GM10248 (cell line): ENCODE measurements at regions of chr7 and their contacts with region 1.

Region 1: DNA sequence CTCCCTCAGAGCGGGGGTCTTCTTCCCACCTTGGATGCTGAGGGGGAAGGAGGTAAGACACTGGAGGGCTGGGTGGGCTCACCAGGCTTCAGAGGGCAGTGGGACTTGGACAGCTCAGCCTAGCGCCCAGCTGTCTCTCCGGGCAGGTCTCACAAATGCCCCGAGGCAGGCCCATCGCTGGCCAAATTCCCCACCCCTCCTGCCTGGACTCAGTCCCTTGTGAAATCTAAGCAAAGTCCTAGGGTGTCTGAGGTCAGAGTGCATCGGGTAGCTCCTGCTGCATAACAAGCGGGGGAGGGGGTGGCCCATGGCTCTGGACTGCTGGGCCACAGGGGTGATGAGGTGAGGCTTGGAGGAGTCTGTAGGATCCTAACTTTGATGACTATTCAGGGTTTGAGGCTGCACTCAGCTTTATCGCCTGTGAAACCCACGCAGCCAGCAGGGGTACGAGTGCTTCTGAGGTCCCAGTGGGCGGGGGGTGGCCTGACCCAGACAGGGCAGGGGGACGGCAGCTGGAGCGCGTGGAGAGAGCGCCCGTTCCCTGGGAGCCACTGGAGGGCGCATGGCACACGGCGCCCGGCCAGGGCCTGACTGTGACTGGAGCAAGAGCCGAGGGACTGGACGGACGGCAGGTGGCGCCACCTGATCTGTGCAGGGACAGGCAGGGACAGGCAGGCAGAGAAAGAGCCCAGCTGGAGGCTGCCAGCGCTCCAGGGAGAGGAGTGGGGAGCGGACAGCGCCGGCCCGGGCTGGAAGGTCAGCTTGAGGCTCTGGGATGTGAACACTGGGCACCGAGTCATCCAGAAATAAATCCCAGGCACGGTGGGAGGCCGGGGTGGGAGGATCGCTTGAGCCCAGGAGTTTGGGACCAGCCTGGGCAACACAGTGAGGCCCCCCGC is 10.0 kb downstream of the CYP2W1 start:
- DNase-seq: peak; percentile 91
- CTCF ChIP-seq: peak; percentile 100

Region 2: DNA sequence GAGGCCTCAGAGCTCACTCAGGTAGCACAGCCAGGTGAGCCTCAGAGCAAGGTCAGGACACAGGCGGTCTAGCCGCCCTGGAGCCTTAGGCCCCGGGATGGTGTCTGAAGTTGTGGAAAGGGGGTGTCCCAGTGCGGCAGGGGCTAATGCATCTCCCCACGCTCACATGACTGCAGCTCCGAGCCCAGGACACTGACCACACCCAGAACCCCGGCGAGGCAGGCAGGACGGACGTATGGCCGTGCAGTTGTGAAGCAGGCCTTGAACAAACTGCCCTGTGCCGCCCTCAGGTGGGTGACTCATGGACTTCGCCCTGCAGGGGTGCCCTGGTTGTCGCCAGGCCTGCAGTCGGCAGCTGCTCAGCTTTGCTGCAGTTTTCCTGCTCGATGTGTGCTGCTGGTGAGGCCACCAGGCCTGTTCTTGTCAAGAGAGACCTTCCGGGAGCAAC is 260.8 kb before region 1 on chr7:
- CTCF ChIA-PET with region 1: no interaction called
- POLR2A ChIA-PET with region 1: no interaction called
- DNase-seq: no peak
- CTCF ChIP-seq: no peak

Region 3: DNA sequence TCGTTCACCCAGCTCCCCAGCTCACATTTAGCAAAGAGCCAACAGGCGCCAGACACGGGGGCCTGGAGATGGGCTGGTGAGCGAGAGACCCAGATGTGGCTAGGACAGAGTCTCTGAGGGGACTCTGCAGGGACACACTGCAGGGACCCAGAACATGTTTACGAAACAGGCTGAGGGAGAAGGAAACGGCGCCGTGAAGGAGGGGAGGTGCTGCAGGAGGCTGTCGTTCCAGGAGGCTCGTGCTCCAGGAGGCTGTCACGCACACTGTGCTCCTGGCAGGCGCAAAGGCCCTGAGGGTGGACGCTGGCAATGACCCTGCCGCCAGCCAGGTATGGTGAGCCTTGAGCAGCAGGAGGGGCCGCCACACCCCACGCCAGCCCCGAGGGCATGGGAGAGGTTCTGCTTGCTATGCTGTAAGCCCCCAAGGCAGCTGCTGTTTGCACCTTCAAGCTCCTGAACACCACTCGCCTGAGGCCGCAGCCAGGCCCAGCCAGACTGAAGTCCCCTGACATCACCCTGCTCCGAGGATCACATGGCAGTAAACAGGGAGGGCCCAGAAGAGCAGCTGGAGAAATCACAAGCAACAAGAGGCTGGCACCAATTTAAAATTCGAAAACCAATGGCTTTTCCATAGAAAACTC is 65.8 kb before region 1 on chr7:
- CTCF ChIA-PET with region 1: interaction called, 19 read pairs
- POLR2A ChIA-PET with region 1: interaction called, 3 read pairs
- DNase-seq: no peak
- CTCF ChIP-seq: no peak

Region 4: DNA sequence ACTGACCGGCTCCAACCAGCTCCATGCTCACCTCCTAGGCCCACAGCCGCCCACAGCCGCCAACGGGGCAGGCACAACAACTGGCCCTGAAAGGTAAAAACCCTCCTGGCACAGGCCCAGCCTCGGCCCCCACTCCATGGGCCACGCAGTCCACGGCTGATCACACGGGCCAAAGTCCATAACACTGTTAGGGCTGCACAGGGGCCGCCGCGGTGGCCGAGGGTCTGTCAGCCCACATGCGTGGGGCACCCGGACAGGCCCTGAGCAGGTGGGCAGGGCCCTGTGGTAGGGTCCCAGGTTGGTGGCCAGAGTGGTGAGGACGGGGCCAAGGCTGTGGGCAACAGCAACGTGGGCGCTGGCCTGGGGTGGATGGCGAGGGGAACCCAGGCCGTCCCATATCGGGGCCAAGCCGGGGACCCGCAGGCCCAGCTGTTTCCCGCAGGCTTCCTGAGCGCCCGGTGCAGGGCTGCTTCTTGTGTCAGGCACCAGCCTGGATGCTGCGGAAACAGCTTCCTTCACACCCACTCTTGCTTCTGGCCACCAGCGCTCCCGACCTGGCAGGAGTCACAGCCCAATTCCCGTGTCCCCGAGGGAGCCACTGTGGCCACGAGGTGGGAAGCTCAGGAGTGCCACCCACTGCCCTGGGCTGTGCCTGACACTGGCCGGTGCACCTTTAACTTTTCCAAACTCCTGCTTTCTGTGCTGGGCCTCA is 19.2 kb after region 1 on chr7:
- CTCF ChIA-PET with region 1: interaction called, 17 read pairs
- POLR2A ChIA-PET with region 1: no interaction called
- DNase-seq: no peak
- CTCF ChIP-seq: no peak

Region 5: DNA sequence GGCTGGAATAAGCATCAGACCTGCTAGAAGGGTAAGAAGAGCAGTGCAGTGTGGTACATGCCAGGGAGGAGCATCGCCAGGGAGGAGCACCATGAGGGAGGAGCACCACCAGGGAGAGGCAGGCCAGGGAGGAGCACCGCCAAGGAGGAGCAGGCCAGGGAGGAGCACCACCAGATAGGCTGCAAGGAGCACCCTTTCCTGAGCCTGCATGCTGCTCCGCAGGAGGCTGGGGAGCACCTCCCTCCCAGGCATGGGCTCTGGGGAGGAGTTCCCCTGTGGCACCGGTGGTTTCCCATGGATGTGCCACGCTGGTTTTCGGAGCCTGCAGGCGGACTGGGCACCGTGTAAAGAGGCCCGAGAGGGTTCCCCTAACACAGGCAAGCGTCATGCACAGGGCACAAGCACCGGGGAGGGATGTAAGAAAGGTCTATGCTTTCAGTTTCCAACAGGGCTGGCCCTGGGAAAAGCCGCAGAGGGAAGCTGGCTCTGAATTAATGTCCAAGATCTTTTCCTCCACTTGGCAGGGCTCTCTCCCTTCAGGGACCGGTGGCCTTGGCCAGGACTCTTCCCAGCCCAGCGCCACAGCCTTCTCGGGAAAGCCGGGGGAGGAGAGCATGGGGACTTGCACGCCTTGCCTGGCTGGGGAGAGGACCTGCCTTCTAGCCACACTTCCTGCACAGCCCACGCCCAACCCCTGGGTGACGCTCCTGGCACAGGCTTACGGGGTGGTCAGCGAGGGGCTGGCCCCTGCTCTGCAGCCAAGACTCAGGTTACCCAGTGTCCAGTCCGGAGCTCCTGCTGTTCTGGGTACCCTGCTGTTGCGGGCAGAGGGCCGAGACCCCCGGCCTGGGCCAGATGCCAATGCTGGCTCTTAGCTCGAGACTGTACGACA is 83.5 kb after region 1 on chr7:
- CTCF ChIA-PET with region 1: interaction called, 15 read pairs
- POLR2A ChIA-PET with region 1: no interaction called
- DNase-seq: no peak
- CTCF ChIP-seq: no peak

Region 6: GRCh38 chr7:1144269-1144771 is 151.4 kb after region 1 on chr7:
- CTCF ChIA-PET with region 1: interaction called, 36 read pairs
- POLR2A ChIA-PET with region 1: no interaction called
- DNase-seq: peak; percentile 52
- CTCF ChIP-seq: peak; percentile 58

Region 7: DNA sequence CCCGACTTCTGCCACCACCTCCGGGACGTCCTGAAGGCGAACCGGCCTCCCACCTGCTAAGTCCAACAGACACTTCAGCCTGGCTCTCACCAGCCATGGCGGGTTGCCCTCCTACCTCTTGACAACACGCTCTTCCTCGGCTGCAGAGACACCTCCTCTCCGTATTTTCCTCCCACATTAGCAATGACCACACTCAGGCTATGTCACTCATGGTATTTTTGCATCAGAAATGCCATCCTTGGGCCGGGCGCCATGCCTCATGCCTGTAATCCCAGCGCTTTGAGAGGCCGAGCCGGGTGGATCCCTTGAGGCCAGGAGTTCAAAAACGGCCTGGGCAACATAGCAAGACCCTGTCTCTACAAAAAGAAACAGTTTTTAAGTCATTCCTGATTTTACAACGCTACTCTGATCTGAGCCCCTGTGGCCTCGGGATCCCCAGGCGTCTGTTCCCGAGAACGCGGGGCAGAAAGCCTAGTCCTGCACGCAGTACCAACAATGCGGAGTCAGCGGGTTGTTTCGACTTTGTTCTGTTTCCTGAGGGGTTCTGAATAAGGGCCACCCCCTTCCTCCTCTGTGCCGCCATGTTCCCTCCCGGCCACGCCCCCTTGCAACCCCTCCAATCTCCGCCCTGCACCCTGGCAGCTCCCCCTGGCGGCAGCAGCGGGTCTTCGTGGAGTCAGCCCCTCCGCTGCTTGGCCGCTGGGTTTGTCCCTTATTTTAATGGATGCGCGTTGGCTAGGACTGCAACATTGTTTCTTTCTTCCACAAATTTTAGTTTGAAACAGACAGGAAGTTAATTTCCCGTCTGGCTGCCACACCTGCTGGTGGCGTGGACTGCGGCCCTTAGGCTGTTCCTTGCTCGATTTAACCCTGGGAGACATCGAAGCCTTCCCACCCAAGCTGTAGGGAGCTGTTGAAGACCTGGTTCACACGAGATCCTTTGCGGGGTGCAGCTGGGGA is 176.7 kb after region 1 on chr7:
- CTCF ChIA-PET with region 1: interaction called, 170 read pairs
- POLR2A ChIA-PET with region 1: no interaction called
- DNase-seq: peak; percentile 90
- CTCF ChIP-seq: peak; percentile 90

Region 8: GRCh38 chr7:1200045-1200444 is 207.1 kb after region 1 on chr7:
- CTCF ChIA-PET with region 1: no interaction called
- POLR2A ChIA-PET with region 1: no interaction called
- DNase-seq: no peak
- CTCF ChIP-seq: no peak